ENCODE measurements at regions of chr3 and their contacts with region 1.

Region 1: GRCh38 chr3:119352849-119353502 is 58.8 kb downstream of the ARHGAP31 start:
- DNase-seq: no peak
- H3K4me3 Mint-ChIP-seq: no peak overlapping the region
- H3K27ac Mint-ChIP-seq: no peak overlapping the region
- H3K4me1 Mint-ChIP-seq: peaks cover 19% of the 10 kb centered on the region
- H3K27me3 Mint-ChIP-seq: peaks cover 28% of the 10 kb centered on the region

Region 2: GRCh38 chr3:119145500-119146191 is 207.3 kb before region 1 on chr3 and contains the start of gene TEX55:
- intact Hi-C with region 1: loop called (anchors 5 kb)
- DNase-seq: no peak
- H3K4me3 Mint-ChIP-seq: no peak within 1 kb of the TSS
- H3K27ac Mint-ChIP-seq: no peak within 1 kb of the TSS
- H3K4me1 Mint-ChIP-seq: no peaks in the 10 kb centered on the region
- H3K27me3 Mint-ChIP-seq: no peaks in the 10 kb centered on the region
- total RNA-seq, gene TEX55: not detected in 2 replicates

Region 3: DNA sequence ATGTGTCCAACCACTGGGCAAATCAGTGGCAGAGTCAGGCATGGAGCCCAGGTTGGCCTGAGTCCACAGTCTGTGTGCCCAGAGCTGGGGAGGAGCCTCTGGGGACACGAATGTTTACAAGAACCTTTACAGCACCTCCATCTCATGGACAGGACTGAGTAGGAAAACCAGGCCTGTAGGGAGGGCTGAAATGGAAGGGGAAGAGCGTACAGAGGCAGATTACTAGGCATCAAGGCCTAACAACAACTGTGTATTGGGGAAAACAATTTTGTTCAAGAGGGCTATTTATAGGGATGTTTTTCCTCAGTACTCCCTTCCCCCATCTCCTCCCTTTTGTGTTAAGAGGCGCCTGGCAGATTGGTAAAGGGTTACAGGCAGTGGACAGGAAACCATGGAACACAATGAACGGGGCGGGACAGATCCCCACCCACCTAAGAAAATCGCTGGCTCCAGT is 73.8 kb before region 1 on chr3:
- intact Hi-C with region 1: loop called (anchors 1 kb)
- DNase-seq: no peak
- H3K4me3 Mint-ChIP-seq: no peak overlapping the region
- H3K27ac Mint-ChIP-seq: no peak overlapping the region
- H3K4me1 Mint-ChIP-seq: peaks cover 5% of the 10 kb centered on the region
- H3K27me3 Mint-ChIP-seq: peaks cover 7% of the 10 kb centered on the region

Region 4: GRCh38 chr3:119885746-119886530 is 533.0 kb after region 1 on chr3:
- intact Hi-C with region 1: no loop called
- DNase-seq: no peak
- H3K4me3 Mint-ChIP-seq: no peak overlapping the region
- H3K27ac Mint-ChIP-seq: no peak overlapping the region
- H3K4me1 Mint-ChIP-seq: no peaks in the 10 kb centered on the region
- H3K27me3 Mint-ChIP-seq: no peaks in the 10 kb centered on the region

Measured in activated T-helper 1 cell treated with anti-CD3 and anti-CD28 coated beads, Interleukin-12 subunit alpha, Interleukin-12 subunit beta, Interleukin-2, Interleukin-4 antibody, amounts not matched to agents 30 ng/mL and 10 ng/mL and 1 ng/mL, durations not matched to agents 14 hours and 24 hours and 36 hours (primary cell).